ENCODE measurements at regions of chr3 and their contacts with region 1.

Region 1: GRCh38 chr3:45037734-45038455 is 11.8 kb downstream of the CLEC3B start:
- DNase-seq: peak; percentile 84
- H3K4me3 Mint-ChIP-seq: no peak overlapping the region
- H3K27ac Mint-ChIP-seq: no peak overlapping the region
- H3K4me1 Mint-ChIP-seq: peaks cover 42% of the 10 kb centered on the region
- H3K27me3 Mint-ChIP-seq: peaks cover 30% of the 10 kb centered on the region

Region 2: DNA sequence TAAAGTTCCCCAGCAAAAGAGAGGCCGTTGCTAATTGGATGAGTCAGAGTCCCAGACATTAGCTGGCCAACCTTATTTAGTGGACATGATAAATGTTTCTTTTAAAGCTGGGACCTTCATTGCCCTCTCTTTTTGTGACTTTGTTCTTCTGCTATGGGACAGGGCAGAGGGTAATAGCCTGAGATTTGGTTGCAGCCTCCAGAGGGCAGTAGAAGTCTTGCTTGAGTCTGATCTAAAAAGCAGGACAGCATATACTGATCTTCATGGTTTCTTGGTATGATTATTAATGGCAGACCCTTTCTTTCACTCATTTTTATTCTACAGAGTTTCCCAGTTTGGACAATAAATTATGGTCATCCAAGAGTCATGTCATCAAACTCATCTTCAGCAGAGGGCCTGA is 508.0 kb before region 1 on chr3:
- intact Hi-C with region 1: loop called (anchors 2 kb)
- DNase-seq: no peak
- H3K4me3 Mint-ChIP-seq: no peak overlapping the region
- H3K27ac Mint-ChIP-seq: no peak overlapping the region
- H3K4me1 Mint-ChIP-seq: peaks cover 4% of the 10 kb centered on the region
- H3K27me3 Mint-ChIP-seq: peaks cover 10% of the 10 kb centered on the region

Region 3: DNA sequence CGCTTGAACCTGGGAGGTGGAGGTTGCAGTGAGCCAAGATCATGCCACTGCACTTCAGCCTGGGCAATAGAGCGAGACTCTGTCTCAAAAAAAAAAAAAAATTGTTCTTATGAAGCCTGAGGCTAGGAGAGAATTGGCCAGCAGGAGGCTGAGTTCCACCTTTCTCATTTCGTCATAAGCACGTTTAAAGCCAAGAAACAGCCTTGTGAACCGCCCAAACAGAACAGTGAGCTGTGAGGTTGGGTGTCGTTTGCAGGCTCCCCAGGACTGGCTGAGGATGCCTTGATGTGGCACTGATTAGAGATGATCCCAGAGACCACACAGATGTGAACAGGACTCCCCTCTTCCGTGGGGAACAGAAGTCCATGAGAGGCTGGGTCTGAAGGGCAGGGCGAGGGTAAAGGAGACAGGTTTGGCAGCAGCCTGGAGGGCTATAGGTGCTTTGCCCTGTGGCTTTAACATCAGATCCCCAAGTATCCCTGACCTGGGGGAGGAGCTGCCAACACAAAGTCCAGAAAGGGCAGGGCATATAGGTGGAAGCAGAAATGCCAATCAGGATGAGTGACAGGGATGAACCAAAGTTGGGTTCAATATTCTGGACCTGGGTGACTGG is 41.1 kb after region 1 on chr3:
- intact Hi-C with region 1: no loop called
- DNase-seq: no peak
- H3K4me3 Mint-ChIP-seq: no peak overlapping the region
- H3K27ac Mint-ChIP-seq: no peak overlapping the region
- H3K4me1 Mint-ChIP-seq: no peaks in the 10 kb centered on the region
- H3K27me3 Mint-ChIP-seq: peaks cover 10% of the 10 kb centered on the region

Region 4: DNA sequence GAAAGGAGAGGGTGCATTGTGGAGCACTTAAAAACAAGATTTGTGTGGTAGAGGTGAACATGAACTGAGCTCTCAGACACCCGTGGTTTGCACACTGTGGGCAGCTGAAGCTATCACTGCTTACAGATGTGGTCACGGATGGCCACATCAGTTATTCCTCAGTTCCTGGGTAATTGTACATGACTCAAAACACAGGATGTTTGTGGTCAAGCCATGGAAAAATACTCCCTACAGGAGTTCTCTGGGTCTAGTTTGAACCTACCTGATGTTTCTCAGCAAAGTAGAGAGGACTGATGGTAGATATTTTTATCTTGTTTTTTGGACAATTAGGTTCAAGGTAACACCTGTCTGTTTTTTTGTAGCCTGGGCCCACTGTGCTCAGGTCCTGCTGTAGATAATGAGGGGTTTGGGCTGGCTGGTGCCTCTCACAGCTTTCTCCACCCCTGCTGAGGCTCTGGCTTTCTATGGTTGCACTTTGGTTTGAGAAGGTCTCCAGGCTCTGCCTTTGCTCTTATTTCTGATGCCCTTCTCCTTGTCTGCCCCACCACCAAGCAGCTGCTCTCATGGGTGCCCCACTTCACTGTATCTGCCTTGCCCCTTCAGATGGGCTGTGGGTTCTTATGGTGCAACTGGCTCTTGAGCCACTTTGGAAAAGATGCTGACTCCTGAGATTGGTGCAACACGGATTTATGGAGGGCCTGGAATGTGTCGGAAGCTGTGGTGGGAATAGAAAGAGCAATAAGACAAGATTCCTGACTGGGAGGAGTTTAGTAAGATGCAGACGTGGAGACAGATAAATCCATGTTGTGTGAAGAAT is 68.2 kb after region 1 on chr3:
- intact Hi-C with region 1: loop called (anchors 1 kb)
- DNase-seq: peak; percentile 78
- H3K4me3 Mint-ChIP-seq: peak overlapping the region; percentile 49
- H3K27ac Mint-ChIP-seq: peak overlapping the region; percentile 69
- H3K4me1 Mint-ChIP-seq: peaks cover 69% of the 10 kb centered on the region
- H3K27me3 Mint-ChIP-seq: peaks cover 29% of the 10 kb centered on the region

Region 5: GRCh38 chr3:45188719-45189659 is 151.1 kb after region 1 on chr3:
- intact Hi-C with region 1: no loop called
- DNase-seq: no peak
- H3K4me3 Mint-ChIP-seq: no peak overlapping the region
- H3K27ac Mint-ChIP-seq: no peak overlapping the region
- H3K4me1 Mint-ChIP-seq: peaks cover 7% of the 10 kb centered on the region
- H3K27me3 Mint-ChIP-seq: peaks cover 16% of the 10 kb centered on the region

Region 6: GRCh38 chr3:45210308-45211041 is 172.6 kb after region 1 on chr3:
- intact Hi-C with region 1: loop called (anchors 1 kb)
- DNase-seq: peak; percentile 67
- H3K4me3 Mint-ChIP-seq: no peak overlapping the region
- H3K27ac Mint-ChIP-seq: no peak overlapping the region
- H3K4me1 Mint-ChIP-seq: peaks cover 14% of the 10 kb centered on the region
- H3K27me3 Mint-ChIP-seq: peaks cover 29% of the 10 kb centered on the region

Region 7: DNA sequence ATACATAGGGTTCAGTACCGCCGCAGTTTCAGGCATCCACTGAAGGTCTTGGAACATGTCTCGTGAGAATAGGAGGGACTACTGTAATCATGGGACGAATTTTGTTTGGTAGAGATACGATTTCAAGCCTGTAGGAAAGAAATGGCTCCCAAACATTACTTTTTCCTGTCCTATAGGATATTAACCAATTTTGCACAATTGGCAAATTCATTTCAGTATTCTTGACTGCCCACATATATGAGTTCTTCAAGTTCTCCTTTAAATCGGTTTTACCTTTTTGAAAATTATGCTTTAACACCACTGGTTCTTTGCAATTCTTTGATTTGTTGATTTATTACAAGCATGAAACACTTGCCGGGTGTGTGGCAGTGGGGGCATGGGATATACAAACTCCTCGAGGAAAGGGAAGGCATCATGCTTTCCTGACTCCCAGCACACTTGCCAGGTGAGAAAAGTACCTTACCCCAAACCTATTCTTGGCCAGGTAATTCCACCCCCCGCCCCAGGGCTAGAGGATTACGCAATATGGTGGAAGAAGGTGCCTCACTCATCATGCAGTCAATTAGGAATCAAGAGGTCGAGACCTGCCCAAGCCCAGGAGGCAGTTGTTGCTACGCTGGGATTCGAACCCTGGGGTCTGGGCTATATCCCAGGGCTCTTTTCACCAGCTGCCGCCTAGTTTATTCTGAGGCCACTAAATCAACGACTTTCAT is 349.9 kb after region 1 on chr3:
- intact Hi-C with region 1: loop called (anchors 1 kb)
- DNase-seq: peak; percentile 3
- H3K4me3 Mint-ChIP-seq: peak overlapping the region; percentile 96
- H3K27ac Mint-ChIP-seq: peak overlapping the region; percentile 84
- H3K4me1 Mint-ChIP-seq: peaks cover 18% of the 10 kb centered on the region
- H3K27me3 Mint-ChIP-seq: peaks cover 18% of the 10 kb centered on the region

Region 8: DNA sequence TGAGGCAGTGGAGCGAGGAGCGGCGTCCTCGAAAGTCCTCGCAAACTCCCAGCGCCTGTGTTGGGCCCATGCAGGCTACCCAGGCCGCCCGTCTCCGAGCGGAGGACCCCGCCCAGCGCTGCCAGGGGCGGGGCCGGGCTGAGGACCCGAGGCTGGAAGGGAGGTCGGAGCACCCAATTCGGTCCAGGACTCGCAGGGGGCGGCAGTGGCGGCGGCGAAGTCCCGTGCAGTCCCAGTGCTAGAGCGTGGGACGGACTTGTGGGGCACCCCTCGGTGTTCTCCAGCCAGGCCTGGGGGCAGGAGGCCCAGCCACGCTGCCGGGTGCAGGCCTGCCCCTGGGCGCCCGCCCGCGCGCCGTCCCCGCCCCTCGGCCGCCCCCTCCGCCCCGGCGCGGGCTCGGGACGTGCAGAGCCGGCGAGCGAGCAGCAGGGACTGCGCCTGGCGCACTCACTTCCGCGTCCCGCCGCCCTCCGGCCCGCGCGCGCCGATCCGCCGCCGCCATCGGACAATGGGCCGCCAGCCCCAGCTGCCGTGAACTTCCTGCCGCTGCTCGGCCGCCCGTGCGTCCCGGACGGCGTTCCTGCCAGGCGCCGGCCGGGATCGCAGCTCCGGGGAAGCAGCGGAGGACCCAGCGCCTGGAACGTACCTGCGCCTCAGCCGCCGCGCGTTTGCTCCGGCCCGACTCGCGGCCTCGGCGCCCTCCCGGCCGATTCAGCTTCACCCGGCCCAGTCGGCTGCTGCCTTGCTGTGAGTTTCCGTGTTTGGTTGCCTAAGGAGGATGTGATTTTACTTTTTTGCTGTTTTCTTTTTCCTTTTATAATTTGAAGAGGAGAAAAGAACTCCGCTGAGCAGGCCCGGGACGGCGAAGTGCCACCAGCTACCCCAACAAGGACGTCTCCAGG is 556.1 kb after region 1 on chr3:
- intact Hi-C with region 1: loop called (anchors 1 kb)
- DNase-seq: peak; percentile 76
- H3K4me3 Mint-ChIP-seq: peak overlapping the region; percentile 89
- H3K27ac Mint-ChIP-seq: peak overlapping the region; percentile 87
- H3K4me1 Mint-ChIP-seq: peaks cover 52% of the 10 kb centered on the region
- H3K27me3 Mint-ChIP-seq: peaks cover 6% of the 10 kb centered on the region